Right ventricle myocardium inferior (tissue), 1 donor: ENCODE measurements at regions of chr17 and their contacts with region 1.

Region 1: DNA sequence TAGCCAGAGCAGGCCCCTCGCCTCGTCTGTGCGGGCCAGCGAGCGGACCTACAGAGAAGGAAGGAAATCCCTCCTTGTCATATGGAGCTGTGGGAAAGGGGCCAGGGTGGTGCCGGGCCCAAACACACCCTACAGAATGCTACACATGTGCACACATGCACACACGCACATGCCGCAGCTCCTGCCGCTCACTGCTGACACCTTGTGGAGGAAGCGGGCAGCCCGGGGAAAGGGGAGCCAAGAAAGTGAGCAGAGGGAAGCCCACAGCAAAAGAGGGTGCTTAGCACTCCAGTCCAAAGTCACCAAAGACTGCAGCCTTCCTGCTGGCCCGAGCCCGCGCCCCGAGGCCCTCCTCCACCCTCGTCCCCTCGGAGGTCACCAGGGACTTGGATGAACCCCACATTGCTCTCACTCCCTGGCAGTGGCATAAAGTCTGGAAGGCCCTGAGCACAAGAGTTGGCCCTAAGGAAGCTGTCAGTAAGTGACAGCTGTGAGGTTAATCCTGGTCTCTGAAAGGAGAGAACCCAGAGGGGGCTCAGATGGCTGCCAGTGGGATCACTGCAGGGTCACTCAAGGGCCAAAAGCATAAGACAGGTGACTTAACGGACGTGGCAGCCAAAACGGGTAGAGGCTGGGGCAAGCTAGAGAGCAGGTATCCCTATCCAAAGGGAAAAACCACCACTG is 68.2 kb downstream of the MYO18A start:
- DNase-seq: peak; percentile 87
- ATAC-seq: peak; percentile 66

Region 2: GRCh38 chr17:28097901-28098300 is 1014.1 kb before region 1 on chr17:
- intact Hi-C with region 1: no loop called
- DNase-seq: no peak
- ATAC-seq: no peak

Region 3: DNA sequence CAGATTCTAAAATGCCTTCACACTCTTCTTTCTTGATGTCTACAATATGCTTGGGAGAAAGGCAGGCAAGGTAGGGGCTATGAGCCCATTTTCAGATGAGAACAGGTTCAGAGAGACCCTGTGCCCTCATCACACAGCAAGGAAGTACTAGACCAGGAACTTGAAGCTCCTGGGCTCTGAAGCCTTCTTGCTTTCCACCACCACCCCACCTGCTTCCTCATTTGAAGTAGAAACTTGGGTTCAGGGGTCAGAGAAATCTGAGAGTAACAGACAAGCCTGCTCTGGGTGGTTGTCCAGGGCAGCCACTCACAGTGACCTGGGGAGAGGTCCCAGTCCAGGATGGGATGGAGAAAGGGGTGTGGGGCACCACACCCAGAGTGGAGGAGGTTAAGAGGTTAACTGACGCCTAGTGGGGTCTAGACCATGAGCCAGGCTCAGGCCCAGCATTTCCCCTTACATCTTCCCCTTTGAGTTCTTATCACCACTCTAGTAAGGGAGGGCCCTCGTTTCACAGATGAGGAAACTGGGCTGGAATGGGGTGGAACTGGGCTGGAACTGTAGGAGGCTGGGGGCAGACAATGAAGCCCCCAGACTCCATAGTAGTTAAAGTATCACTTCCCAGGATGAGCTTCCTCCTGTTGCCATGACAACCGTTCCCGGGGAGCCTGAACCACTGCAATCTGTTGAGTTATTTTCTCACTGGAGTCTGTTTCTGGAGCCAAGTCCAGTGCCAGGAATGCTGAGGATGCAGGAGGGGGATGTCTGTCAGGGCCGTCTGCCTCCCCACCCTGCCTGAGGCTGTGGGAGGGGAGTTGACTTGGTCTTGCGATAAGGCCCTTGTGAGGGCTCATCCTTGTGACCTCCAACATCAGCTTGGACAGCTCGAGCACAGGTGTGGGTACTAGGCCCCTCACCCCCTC is 144.5 kb before region 1 on chr17:
- intact Hi-C with region 1: loop called (anchors 1 kb)
- DNase-seq: no peak
- ATAC-seq: no peak

Region 4: GRCh38 chr17:28973425-28973824 is 138.5 kb before region 1 on chr17:
- intact Hi-C with region 1: loop called (anchors 1 kb)
- DNase-seq: peak; percentile 90
- ATAC-seq: peak; percentile 86